Thyroid gland (tissue), 4 donors: ENCODE measurements at regions of chr3 and their contacts with region 1.

Region 1: GRCh38 chr3:187745201-187746058 is at the start of gene BCL6:
- DNase-seq: peak; percentile 94
- H3K4me3 ChIP-seq: peak within 1 kb of the TSS; percentile 69 to 87 (median 72)
- H3K27ac ChIP-seq: peak within 1 kb of the TSS; percentile 97 to 100 (median 100)
- H3K4me1 ChIP-seq: peaks cover 33 to 44% of the 10 kb centered on the region in 2 donors
- H3K27me3 ChIP-seq: no peaks in the 10 kb centered on the region
- CTCF ChIP-seq: peak in 1 of 6 experiments; percentile 27
- POLR2A ChIP-seq: peak; percentile 94 to 95
- total RNA-seq, gene BCL6: 40.3 to 109 (median 67.2) TPM

Region 2: GRCh38 chr3:187112934-187113793 is 632.3 kb before region 1 on chr3:
- intact Hi-C with region 1: no loop called
- DNase-seq: no peak
- H3K4me3 ChIP-seq: no peak overlapping the region
- H3K27ac ChIP-seq: no peak overlapping the region
- H3K4me1 ChIP-seq: no peaks in the 10 kb centered on the region
- H3K27me3 ChIP-seq: no peaks in the 10 kb centered on the region
- CTCF ChIP-seq: peak in 4 of 6 experiments; percentile 46 to 62 (median 56)
- POLR2A ChIP-seq: no peak

Region 3: GRCh38 chr3:187763850-187764648 is 18.6 kb after region 1 on chr3:
- intact Hi-C with region 1: no loop called
- DNase-seq: no peak
- H3K4me3 ChIP-seq: no peak overlapping the region
- H3K27ac ChIP-seq: no peak overlapping the region
- H3K4me1 ChIP-seq: no peaks in the 10 kb centered on the region
- H3K27me3 ChIP-seq: no peaks in the 10 kb centered on the region
- CTCF ChIP-seq: no peak
- POLR2A ChIP-seq: no peak

Region 4: DNA sequence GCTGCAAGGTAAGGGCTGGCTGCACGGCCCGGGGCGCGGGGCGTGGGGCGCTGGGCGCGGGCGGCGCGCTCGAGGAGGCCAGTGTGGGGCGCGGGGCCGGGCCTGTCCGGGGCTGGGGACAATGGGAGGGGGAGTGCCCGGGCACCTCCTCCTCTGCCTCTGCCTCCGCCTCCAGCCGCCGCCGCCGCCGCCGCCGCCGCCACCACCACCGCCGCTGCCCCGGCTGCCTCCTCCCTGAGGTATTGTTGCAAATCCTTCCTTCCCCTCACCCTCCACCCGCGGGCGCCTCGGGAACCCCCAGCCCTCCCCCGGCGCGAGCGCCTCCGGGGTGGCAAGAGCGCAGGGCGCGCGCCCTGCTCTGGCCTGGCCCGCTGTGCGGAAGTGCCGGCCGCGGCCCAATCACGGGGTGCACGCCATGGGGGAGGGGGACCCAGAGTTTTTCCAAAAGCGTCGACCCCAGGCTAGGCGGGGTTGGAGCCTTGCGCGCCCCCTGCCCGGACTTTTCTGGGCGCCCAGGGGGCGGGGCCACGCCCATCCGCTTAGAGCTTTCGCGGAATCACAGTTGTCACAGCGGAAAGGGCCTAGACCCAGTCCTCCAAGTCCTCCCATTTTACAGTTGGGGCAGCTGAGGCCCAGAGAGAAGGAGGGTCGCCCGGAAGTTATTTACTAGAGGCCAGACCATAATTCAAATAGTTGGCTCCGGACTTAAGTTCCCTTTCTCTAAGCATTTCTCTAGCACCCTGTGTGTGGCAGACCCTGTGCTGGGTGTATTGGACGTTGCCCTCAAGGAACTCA is 408.8 kb after region 1 on chr3 and contains the start of gene LPP:
- intact Hi-C with region 1: loop called (anchors 10 kb)
- DNase-seq: peak; percentile 79 to 81
- H3K4me3 ChIP-seq: peak within 1 kb of the TSS; percentile 27 to 94 (median 88)
- H3K27ac ChIP-seq: peak within 1 kb of the TSS; percentile 87 to 91 (median 88)
- H3K4me1 ChIP-seq: peaks cover 4 to 22% of the 10 kb centered on the region in 2 donors
- H3K27me3 ChIP-seq: no peaks in the 10 kb centered on the region
- CTCF ChIP-seq: no peak
- POLR2A ChIP-seq: peak in 1 of 2 donors; percentile 60
- total RNA-seq, gene LPP: 79.0 to 141 (median 82.8) TPM

Region 5: GRCh38 chr3:188205992-188206416 is 460.6 kb after region 1 on chr3:
- intact Hi-C with region 1: no loop called
- DNase-seq: no peak
- H3K4me3 ChIP-seq: no peak overlapping the region
- H3K27ac ChIP-seq: no peak overlapping the region
- H3K4me1 ChIP-seq: no peaks in the 10 kb centered on the region
- H3K27me3 ChIP-seq: no peaks in the 10 kb centered on the region
- CTCF ChIP-seq: no peak
- POLR2A ChIP-seq: no peak

Region 6: GRCh38 chr3:188627652-188628051 is 882.2 kb after region 1 on chr3:
- intact Hi-C with region 1: loop called (anchors 10 kb)
- DNase-seq: no peak
- H3K4me3 ChIP-seq: no peak overlapping the region
- H3K27ac ChIP-seq: no peak overlapping the region
- H3K4me1 ChIP-seq: peaks cover 14 to 15% of the 10 kb centered on the region in 2 donors
- H3K27me3 ChIP-seq: no peaks in the 10 kb centered on the region
- CTCF ChIP-seq: no peak
- POLR2A ChIP-seq: no peak